Aorta (tissue), 5 donors: ENCODE measurements at regions of chr14 and their contacts with region 1.

Region 1: GRCh38 chr14:95123891-95124579 is 33.3 kb downstream of the DICER1 start:
- DNase-seq: no peak
- ATAC-seq: no peak
- H3K4me3 ChIP-seq: no peak overlapping the region
- H3K27ac ChIP-seq: no peak overlapping the region
- H3K4me1 ChIP-seq: no peaks in the 10 kb centered on the region
- H3K27me3 ChIP-seq: no peaks in the 10 kb centered on the region

Region 2: DNA sequence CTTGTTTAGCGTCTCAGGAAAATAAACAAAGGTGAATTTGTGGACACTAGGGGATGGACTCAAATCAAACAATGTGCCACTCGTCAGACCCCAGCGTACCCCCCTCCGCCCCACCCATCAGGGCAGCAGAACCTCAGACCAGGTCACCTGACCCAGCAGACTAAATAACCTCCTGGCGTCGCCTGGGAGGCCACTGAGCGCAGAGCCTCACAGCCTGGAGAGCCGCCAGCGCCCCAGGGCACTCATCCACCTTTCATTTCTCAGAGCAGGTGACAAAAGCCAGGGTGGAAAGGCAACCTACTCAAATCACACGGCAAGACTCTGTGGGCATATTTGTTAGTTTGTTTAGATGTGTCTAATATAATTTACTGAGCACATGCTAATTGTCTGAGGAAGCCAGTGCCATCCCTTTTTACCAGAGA is 67.5 kb before region 1 on chr14:
- intact Hi-C with region 1: no loop called
- DNase-seq: no peak
- ATAC-seq: no peak
- H3K4me3 ChIP-seq: no peak overlapping the region
- H3K27ac ChIP-seq: no peak overlapping the region
- H3K4me1 ChIP-seq: no peaks in the 10 kb centered on the region
- H3K27me3 ChIP-seq: no peaks in the 10 kb centered on the region

Region 3: GRCh38 chr14:95078828-95079227 is 45.2 kb before region 1 on chr14:
- intact Hi-C with region 1: no loop called
- DNase-seq: no peak
- ATAC-seq: no peak
- H3K4me3 ChIP-seq: no peak overlapping the region
- H3K27ac ChIP-seq: no peak overlapping the region
- H3K4me1 ChIP-seq: no peaks in the 10 kb centered on the region
- H3K27me3 ChIP-seq: no peaks in the 10 kb centered on the region

Region 4: GRCh38 chr14:95424529-95424928 is 300.5 kb after region 1 on chr14:
- intact Hi-C with region 1: loop called in 1 of 2 experiments (anchors 10 kb)
- DNase-seq: no peak
- ATAC-seq: no peak
- H3K4me3 ChIP-seq: no peak overlapping the region
- H3K27ac ChIP-seq: no peak overlapping the region
- H3K4me1 ChIP-seq: no peaks in the 10 kb centered on the region
- H3K27me3 ChIP-seq: no peaks in the 10 kb centered on the region